Activated CD4-positive, alpha-beta memory T cell treated with anti-CD3 and anti-CD28 coated beads for 36 hours (primary cell): ENCODE measurements at regions of chr19 and their contacts with region 1.

Region 1: DNA sequence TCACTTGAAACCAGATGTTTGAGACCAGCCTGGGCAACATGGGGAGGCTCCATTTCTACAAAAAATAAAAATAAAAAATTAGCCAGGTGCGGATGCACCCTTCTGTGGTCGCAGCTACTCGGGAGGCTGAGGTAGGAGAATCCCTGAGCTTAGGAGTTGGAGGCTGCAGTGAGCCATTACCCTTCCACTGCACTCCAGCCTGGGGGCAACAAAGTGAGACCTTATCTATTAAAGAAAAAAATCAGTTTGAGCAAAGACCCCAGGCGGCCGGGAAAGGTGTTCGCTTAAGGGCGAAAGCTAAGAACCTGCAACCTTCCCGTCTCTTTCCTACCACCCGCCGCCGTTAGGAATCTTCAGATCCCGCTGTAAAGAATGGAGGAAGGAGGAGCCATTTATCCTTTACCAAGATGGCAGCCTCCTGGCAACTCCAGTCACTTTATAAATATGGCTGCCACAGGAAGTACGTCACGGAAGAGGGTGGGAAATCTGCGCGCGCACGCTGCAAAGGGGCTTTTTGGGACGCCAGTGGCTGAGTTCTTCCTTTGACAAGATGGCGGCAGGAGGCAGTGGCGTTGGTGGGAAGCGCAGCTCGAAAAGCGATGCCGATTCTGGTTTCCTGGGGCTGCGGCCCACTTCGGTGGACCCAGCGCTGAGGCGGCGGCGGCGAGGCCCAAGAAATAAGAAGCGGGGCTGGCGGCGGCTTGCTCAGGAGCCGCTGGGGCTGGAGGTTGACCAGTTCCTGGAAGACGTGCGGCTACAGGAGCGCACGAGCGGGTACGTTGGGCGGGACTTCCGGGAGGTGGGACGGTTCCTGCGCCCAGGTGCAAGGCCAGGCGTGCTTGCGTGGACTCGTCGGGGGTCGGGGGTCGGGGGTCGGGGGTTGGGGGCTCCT is at the start of gene NOP53:
- DNase-seq: peak; percentile 98
- H3K4me3 Mint-ChIP-seq: peak within 1 kb of the TSS; percentile 99
- H3K27ac Mint-ChIP-seq: peak within 1 kb of the TSS; percentile 100
- H3K4me1 Mint-ChIP-seq: peaks cover 49% of the 10 kb centered on the region
- H3K27me3 Mint-ChIP-seq: peaks cover 2% of the 10 kb centered on the region
- total RNA-seq, gene NOP53: 259 to 268 TPM

Region 2: DNA sequence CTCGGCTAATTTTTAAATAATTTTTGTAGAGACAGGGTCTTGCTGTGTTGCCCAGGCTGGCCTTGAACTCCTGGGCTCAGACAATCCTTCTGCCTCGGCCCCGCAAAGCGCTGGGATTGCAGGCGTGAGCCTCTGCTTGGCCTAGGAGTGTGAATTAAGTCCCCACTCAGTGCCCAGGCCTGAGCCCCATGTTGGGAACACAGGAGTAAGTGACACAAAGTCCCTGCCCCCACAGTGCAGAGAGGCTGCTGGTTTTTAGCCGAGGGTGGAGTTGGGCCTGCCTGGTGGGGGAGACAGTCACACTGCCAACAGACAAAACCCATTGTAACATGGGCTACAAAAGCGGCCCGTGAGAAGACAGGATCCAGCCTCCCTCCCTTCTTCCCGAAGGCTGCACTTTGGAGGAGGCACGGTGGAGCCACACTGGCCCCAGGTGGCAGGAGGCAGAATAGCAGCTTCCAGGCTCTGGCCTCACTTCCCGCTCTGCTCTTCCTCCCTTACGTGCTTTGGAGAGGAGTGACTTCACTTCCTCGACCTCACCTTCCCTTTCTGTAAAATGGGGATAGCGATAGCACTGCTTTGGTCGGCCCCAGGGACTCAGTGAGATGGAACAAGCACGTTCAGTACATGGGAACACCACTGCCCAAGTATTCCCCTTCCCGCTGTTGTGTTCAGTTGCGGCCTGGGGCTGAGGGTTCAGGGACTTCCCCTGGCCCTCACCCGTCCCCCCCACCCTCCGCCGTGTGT is 47.2 kb before region 1 on chr19:
- CTCF ChIA-PET with region 1: interaction called, 15 read pairs
- POLR2A ChIA-PET with region 1: no interaction called
- intact Hi-C with region 1: no loop called
- DNase-seq: peak; percentile 74
- H3K4me3 Mint-ChIP-seq: no peak overlapping the region
- H3K27ac Mint-ChIP-seq: no peak overlapping the region
- H3K4me1 Mint-ChIP-seq: no peaks in the 10 kb centered on the region
- H3K27me3 Mint-ChIP-seq: no peaks in the 10 kb centered on the region

Region 3: GRCh38 chr19:47713046-47714021 is 31.9 kb before region 1 on chr19 and contains the start of gene EHD2:
- CTCF ChIA-PET with region 1: interaction called, 183 read pairs
- POLR2A ChIA-PET with region 1: interaction called, 6 read pairs
- intact Hi-C with region 1: loop called (anchors 1 kb)
- DNase-seq: peak; percentile 64
- H3K4me3 Mint-ChIP-seq: peak within 1 kb of the TSS; percentile 14
- H3K27ac Mint-ChIP-seq: no peak within 1 kb of the TSS
- H3K4me1 Mint-ChIP-seq: no peaks in the 10 kb centered on the region
- H3K27me3 Mint-ChIP-seq: peaks cover 26% of the 10 kb centered on the region
- total RNA-seq, gene EHD2: 0.81 to 1.6 TPM

Region 4: DNA sequence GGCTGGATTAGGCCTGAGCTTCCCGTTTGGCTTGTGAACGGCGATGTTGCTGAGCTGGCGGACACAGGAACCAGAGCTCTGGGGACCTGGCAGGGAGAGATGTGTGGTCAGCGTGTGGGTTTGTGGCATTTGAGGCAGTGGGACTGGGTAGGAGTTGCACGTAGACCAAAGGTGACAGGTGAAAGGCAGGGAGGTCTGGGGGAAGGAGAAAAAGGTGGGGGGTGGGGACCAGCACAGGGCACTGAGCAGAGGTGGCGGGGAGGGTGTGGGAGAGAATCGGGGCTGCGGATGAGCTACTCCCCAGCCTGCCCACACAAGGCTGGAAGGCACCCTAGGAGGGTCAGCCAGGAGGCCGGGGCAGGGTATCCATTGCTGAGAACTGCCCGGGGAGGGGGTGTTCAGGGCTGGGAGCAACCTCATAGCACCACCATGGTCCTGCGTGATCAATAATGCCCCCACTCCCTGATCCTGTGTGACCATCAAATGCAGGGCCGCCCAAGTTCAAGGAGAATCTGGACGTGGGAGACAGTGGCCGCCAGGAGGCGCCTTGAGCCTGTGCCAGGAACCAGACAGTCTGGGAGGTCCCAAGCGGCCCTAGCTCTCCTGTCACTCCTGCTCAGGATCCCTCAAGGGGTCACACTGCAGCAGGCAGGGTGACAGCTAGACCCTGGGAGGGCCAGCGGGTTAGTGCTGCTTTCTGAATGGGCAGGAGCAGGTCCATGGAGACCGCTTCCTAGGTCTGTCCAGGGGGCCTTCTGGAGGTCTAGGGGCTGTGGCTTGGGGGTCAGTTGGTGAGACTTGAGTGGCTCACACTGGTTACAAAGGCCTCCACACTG is 20.5 kb after region 1 on chr19:
- CTCF ChIA-PET with region 1: interaction called, 11 read pairs
- POLR2A ChIA-PET with region 1: no interaction called
- intact Hi-C with region 1: no loop called
- DNase-seq: peak; percentile 55
- H3K4me3 Mint-ChIP-seq: no peak overlapping the region
- H3K27ac Mint-ChIP-seq: no peak overlapping the region
- H3K4me1 Mint-ChIP-seq: peaks cover 4% of the 10 kb centered on the region
- H3K27me3 Mint-ChIP-seq: peaks cover 4% of the 10 kb centered on the region